ENCODE measurements at regions of chr17 and their contacts with region 1.

Region 1: DNA sequence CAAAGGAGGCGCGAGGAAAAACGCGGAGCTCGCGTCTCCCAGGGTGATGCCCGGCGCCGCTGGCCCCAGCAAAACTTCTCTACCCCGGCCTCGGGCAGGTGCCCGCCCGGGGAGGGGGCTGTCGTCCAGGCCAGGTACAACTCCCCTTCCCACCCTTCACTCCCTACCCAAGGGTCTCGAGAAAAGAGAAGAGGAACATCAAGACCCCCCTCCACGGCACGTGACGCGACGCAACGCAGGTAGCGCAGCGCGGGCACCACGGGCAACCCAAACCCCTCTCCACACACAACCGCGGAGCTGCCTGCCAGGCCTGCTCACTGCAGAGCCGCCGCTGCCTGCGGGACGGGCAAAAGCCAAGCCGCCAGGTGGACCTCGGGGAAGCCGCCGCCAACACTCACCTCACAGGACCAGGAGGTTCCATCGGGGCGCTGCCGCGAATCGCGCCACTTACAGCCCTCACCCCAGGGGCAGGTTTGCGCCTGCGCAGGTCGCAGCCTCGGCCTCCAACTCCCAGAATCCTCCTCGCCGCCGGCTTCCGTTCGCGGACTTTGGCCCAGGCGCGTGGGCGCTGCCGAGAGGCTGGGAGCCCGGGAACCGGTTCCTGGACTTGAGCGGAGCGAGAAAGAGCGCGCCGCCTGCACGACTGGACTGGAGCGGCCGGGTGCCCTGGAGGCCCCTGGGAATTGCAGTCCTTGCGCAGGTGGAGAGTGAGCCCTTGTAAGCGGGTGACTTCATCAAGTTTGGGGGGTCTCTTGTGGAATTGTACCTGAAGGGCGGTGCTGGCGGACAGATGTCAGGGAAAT is at the start of gene ZNF232:
- DNase-seq: peak; percentile 95
- H3K4me3 ChIP-seq: peak within 1 kb of the TSS; percentile 64 to 92 (median 71)
- H3K27ac ChIP-seq: peak within 1 kb of the TSS; percentile 28
- H3K4me1 ChIP-seq: peaks cover 8% of the 10 kb centered on the region
- H3K27me3 ChIP-seq: peaks cover 11% of the 10 kb centered on the region
- CTCF ChIP-seq: no peak
- total RNA-seq, gene ZNF232: 5.0 to 7.2 TPM

Region 2: GRCh38 chr17:4956493-4957061 is 155.0 kb before region 1 on chr17:
- CTCF ChIA-PET with region 1: no interaction called
- dilution Hi-C with region 1: no loop called
- in situ Hi-C with region 1: no loop called
- intact Hi-C with region 1: no loop called
- DNase-seq: no peak
- H3K4me3 ChIP-seq: no peak overlapping the region
- H3K27ac ChIP-seq: no peak overlapping the region
- H3K4me1 ChIP-seq: no peaks in the 10 kb centered on the region
- H3K27me3 ChIP-seq: no peaks in the 10 kb centered on the region
- CTCF ChIP-seq: no peak

Region 3: DNA sequence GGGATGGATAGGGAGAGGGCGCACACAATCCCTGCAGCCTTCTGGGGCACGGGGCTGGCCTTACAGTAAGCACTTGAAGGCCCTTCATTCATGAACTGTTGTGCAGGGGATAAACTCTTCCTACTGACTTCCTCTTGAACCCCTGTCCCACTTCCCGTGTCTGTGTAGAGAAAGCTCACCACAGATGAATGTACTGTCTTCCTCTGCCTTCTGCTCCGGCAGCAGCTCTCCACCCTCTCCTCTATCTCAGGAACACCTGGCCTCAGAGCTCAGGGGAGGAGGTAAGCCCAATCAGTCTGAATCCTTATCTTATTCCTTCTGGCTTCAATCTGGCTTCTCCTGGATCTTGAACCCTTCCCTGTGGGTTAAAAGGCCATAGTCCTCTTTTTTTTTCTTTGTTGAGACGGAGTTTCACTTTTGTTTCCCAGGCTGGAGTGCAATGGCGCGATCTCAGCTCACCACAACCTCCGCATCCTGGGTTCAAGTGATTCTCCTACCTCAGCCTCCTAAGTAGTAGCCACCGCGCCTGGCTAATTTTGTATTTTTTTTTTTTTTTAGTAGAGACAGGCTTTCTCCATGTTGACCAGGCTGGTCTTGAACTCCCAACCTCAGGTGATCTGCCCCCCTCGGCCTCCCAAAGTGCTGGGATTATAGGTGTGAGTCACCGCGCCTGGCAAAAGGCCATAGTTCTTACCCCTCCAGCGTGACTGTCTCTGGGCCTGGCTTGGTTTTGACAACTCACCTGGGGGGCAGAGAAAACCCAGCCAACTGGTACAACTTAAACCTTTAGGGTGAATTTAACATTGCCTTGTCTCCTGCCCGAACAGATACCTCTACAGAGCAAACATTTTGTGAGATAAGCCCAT is 69.2 kb before region 1 on chr17:
- CTCF ChIA-PET with region 1: interaction called, 3 read pairs
- dilution Hi-C with region 1: loop called (anchors 5 kb)
- in situ Hi-C with region 1: no loop called
- intact Hi-C with region 1: no loop called
- DNase-seq: no peak
- H3K4me3 ChIP-seq: no peak overlapping the region
- H3K27ac ChIP-seq: no peak overlapping the region
- H3K4me1 ChIP-seq: no peaks in the 10 kb centered on the region
- H3K27me3 ChIP-seq: no peaks in the 10 kb centered on the region
- CTCF ChIP-seq: no peak

Region 4: DNA sequence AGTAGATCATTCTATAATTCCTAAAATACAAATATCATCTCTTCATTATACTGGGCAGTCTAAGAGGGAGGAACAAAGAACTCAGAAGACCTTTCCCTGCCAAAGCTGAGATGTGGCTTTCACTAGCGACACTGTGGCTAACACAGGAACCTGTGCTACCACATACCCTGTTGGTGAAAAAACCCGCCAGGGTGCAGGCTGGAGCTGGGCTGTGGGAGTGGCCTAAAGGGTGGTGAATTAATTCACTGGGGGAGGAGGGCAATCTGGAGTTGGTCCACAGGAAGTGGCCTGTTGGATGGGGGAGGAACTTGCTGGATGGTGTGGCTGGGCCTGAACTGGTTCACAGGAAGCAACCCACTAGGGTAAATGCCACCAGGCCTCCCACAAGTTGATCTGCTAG is 72.7 kb after region 1 on chr17:
- CTCF ChIA-PET with region 1: no interaction called
- dilution Hi-C with region 1: loop called (anchors 5 kb)
- in situ Hi-C with region 1: no loop called
- intact Hi-C with region 1: no loop called
- DNase-seq: no peak
- H3K4me3 ChIP-seq: no peak overlapping the region
- H3K27ac ChIP-seq: no peak overlapping the region
- H3K4me1 ChIP-seq: no peaks in the 10 kb centered on the region
- H3K27me3 ChIP-seq: no peaks in the 10 kb centered on the region
- CTCF ChIP-seq: no peak

Region 5: GRCh38 chr17:5191541-5192417 is 80.2 kb after region 1 on chr17 and contains the start of gene ZNF594:
- CTCF ChIA-PET with region 1: no interaction called
- dilution Hi-C with region 1: no loop called
- in situ Hi-C with region 1: no loop called
- intact Hi-C with region 1: loop called (anchors 5 kb)
- DNase-seq: peak; percentile 91
- H3K4me3 ChIP-seq: peak within 1 kb of the TSS; percentile 68 to 85 (median 78)
- H3K27ac ChIP-seq: peak within 1 kb of the TSS; percentile 41
- H3K4me1 ChIP-seq: no peaks in the 10 kb centered on the region
- H3K27me3 ChIP-seq: no peaks in the 10 kb centered on the region
- CTCF ChIP-seq: peak; percentile 55 to 80
- total RNA-seq, gene ZNF594: 4.8 to 5.8 TPM

Region 6: DNA sequence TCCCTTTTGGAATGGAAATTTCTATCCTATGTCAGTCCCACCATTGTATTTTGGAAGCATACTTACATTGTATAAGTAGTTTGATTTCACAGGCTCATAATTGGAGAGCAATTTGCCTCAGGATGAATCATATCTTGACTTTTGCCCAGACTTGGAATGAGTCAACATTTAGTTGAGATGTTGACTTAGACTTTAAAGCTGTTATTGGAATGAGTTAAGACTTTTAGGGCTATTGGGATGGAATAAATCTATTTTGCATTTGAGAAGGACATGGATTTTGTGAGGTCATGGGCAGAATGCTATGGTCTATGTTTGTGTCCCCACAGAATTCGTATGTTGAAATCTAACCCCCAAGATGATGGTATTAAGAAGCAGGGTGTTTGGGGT is 92.3 kb after region 1 on chr17:
- CTCF ChIA-PET with region 1: no interaction called
- dilution Hi-C with region 1: no loop called
- in situ Hi-C with region 1: loop called in 1 of 2 experiments (anchors 25 kb)
- intact Hi-C with region 1: no loop called
- DNase-seq: peak; percentile 33
- H3K4me3 ChIP-seq: no peak overlapping the region
- H3K27ac ChIP-seq: no peak overlapping the region
- H3K4me1 ChIP-seq: no peaks in the 10 kb centered on the region
- H3K27me3 ChIP-seq: no peaks in the 10 kb centered on the region
- CTCF ChIP-seq: no peak